ENCODE measurements at regions of chr4 and their contacts with region 1.

Region 1: GRCh38 chr4:178026999-178027398 is 584.8 kb upstream of the AGA start:
- DNase-seq: no peak
- ATAC-seq: no peak
- H3K4me3 ChIP-seq: no peak overlapping the region
- H3K4me3 Mint-ChIP-seq: no peak overlapping the region
- H3K27ac ChIP-seq: no peak overlapping the region
- H3K27ac Mint-ChIP-seq: no peak overlapping the region
- H3K4me1 ChIP-seq: no peaks in the 10 kb centered on the region
- H3K4me1 Mint-ChIP-seq: no peaks in the 10 kb centered on the region
- H3K27me3 ChIP-seq: no peaks in the 10 kb centered on the region
- H3K27me3 Mint-ChIP-seq: no peaks in the 10 kb centered on the region
- CTCF ChIP-seq: no peak

Region 2: GRCh38 chr4:178063568-178063967 is 36.6 kb after region 1 on chr4:
- CTCF ChIA-PET with region 1: no interaction called
- POLR2A ChIA-PET with region 1: no interaction called
- intact Hi-C with region 1: loop called in 1 of 2 experiments (anchors 1 kb)
- DNase-seq: no peak
- ATAC-seq: no peak
- H3K4me3 ChIP-seq: no peak overlapping the region
- H3K4me3 Mint-ChIP-seq: no peak overlapping the region
- H3K27ac ChIP-seq: no peak overlapping the region
- H3K27ac Mint-ChIP-seq: no peak overlapping the region
- H3K4me1 ChIP-seq: no peaks in the 10 kb centered on the region
- H3K4me1 Mint-ChIP-seq: no peaks in the 10 kb centered on the region
- H3K27me3 ChIP-seq: no peaks in the 10 kb centered on the region
- H3K27me3 Mint-ChIP-seq: no peaks in the 10 kb centered on the region
- CTCF ChIP-seq: no peak